Gastrocnemius medialis (tissue), 4 donors: ENCODE measurements at regions of chr22 and their contacts with region 1.

Region 1: DNA sequence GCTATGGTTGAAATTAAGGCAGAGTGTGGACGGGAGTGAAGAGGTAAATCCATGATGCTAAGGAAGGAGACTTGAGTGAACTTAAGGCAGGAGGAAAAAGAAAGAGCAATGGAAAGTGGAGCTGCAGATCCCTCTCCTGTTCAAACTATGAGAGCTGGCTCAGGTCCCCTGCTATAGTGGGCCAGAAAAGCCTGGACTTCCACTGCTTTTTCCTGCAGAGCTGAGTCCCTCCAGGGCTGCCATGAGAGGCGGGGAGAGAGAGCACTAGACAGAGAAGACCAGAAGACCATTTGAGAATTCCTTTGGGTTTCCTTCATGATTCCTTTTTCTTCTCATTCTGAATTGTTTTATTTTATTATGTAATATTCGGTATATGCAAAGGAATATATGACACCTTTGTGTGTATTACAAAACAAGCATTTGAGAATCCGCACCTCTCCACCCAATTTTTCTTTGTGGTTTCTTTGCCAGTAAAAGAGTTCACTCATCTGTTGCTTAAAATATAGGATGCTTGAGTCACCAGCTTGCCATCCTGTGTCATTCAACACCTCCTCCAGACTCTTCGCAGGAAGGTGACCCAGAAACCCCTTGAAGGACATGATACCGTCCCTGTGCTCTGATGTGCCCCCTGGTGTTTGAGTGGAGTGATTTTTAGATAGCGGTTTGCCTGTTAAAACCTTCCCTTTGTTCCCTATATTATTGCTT is 24.4 kb downstream of the SREBF2 start:
- DNase-seq: peak in 1 of 2 donors; percentile 63
- ATAC-seq: peak; percentile 85 to 94
- H3K4me3 ChIP-seq: no peak overlapping the region
- H3K27ac ChIP-seq: peak overlapping the region in 3 of 4 donors; percentile 6 to 21 (median 8)
- H3K4me1 ChIP-seq: peaks cover 20% of the 10 kb centered on the region in 2 donors
- H3K27me3 ChIP-seq: no peaks in the 10 kb centered on the region
- CTCF ChIP-seq: peak; percentile 43 to 67 (median 61)
- POLR2A ChIP-seq: no peak

Region 2: GRCh38 chr22:41697126-41697775 is 160.1 kb before region 1 on chr22:
- in situ Hi-C with region 1: no loop called
- intact Hi-C with region 1: loop called (anchors 5 kb)
- DNase-seq: peak; percentile 58 to 78
- ATAC-seq: peak; percentile 80 to 86
- H3K4me3 ChIP-seq: peak overlapping the region in 2 of 4 donors; percentile 14 to 30
- H3K27ac ChIP-seq: peak overlapping the region in 2 of 4 donors; percentile 41 to 56
- H3K4me1 ChIP-seq: peaks cover 4% of the 10 kb centered on the region in 2 donors
- H3K27me3 ChIP-seq: no peaks in the 10 kb centered on the region
- CTCF ChIP-seq: peak; percentile 84 to 99 (median 95)
- POLR2A ChIP-seq: no peak

Region 3: DNA sequence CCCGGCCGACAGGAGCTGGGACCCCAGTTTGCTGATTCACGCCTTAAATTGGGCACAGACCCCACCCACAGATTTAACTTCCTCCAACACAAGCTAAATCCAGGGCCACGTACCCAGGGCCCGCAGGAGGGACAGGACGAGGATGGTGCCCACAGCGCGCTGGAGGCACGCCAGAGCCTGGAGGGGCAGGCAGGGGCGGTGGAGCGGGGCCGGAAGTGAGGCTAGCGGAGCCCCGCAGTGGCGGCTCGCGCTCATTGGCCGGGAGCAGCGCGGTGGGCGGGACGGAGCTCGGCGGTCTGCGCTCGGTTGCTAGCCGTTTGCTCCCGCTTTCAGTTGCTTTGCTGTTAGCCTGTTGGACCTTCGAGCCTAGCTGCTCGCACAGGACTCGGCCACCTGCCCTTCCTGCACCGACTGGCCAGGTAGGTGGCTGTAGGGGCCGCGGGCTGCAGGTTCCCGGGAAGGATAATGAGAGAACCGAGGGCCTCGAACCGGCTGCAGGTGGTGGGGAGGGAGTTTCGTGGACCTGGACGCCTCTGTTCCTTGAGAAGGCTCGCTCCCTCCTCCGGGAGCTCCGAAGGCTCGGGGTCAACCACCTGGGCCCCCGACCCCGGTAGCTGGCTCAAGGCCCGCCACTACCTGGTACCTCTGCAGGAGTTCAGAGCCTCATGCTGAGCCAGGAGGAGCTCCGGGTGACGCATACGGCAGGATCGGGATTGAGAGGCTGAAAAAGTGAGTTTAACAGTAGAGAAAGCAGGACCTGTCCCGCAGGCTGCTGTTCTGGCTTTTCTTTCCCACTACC is 56.8 kb before region 1 on chr22 and contains the start of gene CCDC134:
- in situ Hi-C with region 1: no loop called
- intact Hi-C with region 1: loop called (anchors 5 kb)
- DNase-seq: peak; percentile 80 to 89
- ATAC-seq: peak; percentile 89 to 91
- H3K4me3 ChIP-seq: peak within 1 kb of the TSS; percentile 72 to 95 (median 86)
- H3K27ac ChIP-seq: peak within 1 kb of the TSS; percentile 94 to 99 (median 96)
- H3K4me1 ChIP-seq: peaks cover 19 to 21% of the 10 kb centered on the region in 2 donors
- H3K27me3 ChIP-seq: no peaks in the 10 kb centered on the region
- CTCF ChIP-seq: no peak
- POLR2A ChIP-seq: peak; percentile 65 to 79
- total RNA-seq, gene CCDC134: 3.3 to 7.7 (median 6.0) TPM

Region 4: GRCh38 chr22:41822317-41823060 is 34.8 kb before region 1 on chr22:
- in situ Hi-C with region 1: no loop called
- intact Hi-C with region 1: loop called (anchors 1 kb)
- DNase-seq: no peak
- ATAC-seq: peak in 1 of 2 donors; percentile 41
- H3K4me3 ChIP-seq: no peak overlapping the region
- H3K27ac ChIP-seq: no peak overlapping the region
- H3K4me1 ChIP-seq: peaks cover 22 to 24% of the 10 kb centered on the region in 2 donors
- H3K27me3 ChIP-seq: no peaks in the 10 kb centered on the region
- CTCF ChIP-seq: peak; percentile 50 to 72 (median 65)
- POLR2A ChIP-seq: no peak

Region 5: DNA sequence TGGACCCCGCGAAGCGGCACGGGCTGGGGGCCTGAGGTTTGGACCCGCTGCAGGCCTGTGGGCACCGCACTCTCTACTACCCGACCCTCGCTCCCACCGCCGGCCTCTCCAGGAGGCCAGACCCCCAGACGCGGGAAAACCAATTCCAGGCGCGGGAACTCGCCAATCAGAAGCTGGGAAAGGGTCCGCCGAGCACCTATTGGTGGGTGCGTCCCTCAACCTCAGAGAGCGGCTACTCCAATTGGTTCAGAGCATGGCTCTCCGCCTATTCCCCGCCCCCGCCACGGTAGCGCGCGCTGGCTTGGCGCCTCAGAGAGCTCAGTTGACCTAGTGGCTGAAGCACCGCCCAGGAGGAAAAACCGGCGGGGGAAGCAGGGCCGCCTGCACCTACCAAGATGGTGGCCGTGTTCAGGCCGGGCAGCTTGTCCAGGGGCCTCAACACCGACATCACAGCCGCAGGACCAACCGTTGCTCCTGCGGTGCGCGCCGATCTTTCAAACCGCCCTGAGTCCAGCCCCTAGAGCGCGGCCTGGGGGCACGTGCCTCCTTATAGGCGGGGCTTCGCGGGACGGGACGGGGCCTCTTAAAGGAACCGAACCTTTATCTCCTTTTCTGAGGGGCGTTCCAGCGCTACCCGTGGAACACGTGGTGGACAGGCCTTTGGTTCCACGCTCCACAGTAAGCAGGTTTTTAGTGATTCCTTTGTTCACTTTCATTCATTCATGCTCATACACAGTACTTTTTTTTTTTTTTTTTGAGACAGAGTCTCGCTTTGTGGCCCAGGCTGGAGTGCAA is 89.5 kb after region 1 on chr22 and contains the start of gene CENPM:
- in situ Hi-C with region 1: no loop called
- intact Hi-C with region 1: no loop called
- DNase-seq: peak; percentile 80 to 88
- ATAC-seq: peak; percentile 95 to 98
- H3K4me3 ChIP-seq: peak within 1 kb of the TSS; percentile 61 to 83 (median 80)
- H3K27ac ChIP-seq: peak within 1 kb of the TSS; percentile 61 to 77 (median 68)
- H3K4me1 ChIP-seq: peaks cover 0 to 14% of the 10 kb centered on the region in 2 donors
- H3K27me3 ChIP-seq: peaks cover 0 to 1% (median 0%) of the 10 kb centered on the region in 3 donors
- CTCF ChIP-seq: peak in 1 of 5 experiments; percentile 12
- POLR2A ChIP-seq: no peak
- total RNA-seq, gene CENPM: 1.5 to 5.1 TPM in 2 of 4 donors, not detected in the others